Caco-2 (cell line): ENCODE measurements at regions of chr12 and their contacts with region 1.

Region 1: DNA sequence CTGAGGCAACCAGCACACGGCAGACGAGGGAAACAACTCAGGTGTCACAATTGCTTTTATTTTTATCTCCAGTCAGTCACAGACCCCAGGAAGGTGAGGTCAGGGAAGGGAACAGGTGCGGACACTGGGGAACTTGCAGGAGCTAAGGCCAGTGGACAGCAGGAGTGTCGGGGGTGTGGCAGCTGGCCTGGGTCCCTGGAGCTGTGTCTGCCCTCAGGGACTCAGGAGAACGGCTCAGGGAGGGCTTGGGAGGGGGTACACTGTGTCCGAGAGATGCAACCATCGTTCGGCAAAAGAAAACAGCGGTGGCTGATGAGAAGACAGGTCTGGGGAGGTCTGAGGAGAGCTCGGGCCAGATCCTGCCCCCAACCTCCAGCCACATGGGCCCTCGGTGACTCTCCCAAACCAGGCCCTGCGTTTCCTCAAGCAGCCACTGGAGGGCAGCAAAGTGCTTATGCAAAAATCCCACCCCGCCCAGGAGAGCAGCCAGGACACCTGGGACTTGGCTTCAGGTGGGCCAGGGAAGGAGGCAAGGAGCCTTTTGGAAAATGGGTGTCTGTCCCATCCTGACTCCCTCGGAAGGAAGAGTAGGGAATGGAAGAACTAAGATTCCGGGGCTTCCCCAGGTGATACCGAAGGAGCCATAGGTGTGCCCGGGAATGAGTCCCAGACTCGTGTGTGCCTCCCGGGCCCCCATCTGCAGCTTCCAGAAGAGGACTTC is 24.1 kb upstream of the BCDIN3D start:
- DNase-seq: peak; percentile 89 to 93
- H3K4me3 ChIP-seq: 0 out of 2 replicates have a peak overlapping the region, but pooled peaks have one; percentile 1
- H3K4me3 Mint-ChIP-seq: peak overlapping the region; percentile 60
- H3K27ac Mint-ChIP-seq: peak overlapping the region; percentile 90
- H3K4me1 ChIP-seq: peaks cover 53% of the 10 kb centered on the region
- H3K4me1 Mint-ChIP-seq: peaks cover 46% of the 10 kb centered on the region
- H3K27me3 ChIP-seq: no peaks in the 10 kb centered on the region
- H3K27me3 Mint-ChIP-seq: no peaks in the 10 kb centered on the region
- CTCF ChIP-seq: peak; percentile 98 to 99

Region 2: DNA sequence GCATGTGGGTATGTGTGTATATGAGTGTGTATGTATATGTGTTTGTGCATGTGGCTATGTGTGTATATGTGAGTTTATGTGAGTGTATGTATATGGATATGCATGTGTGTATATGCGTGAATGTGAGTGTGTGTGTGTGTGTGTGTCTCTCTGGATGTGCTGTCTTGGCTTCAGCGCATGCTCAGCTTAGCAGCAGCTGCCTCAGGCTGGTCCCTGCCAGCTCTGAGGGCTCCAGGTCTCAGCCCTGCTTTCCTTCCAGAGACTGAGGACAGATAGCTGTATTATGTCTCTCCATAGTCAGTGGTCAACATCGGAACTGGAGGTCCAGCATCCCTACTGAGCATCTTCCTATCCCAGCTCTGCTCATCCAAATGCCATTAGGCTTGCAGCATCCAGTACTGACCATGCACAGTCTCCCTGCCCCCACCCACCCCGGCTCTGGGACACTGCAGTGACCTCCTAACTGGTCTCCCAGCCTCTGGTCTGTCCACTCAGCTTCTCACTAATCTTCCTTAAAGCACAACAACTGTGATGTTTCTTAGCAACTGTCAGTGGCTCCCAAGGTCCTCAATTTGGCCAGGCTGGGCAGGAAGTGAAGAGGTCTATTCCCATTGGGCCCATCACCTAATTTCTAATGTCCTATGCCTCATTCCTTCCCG is 13.9 kb after region 1 on chr12:
- CTCF ChIA-PET with region 1: no interaction called
- POLR2A ChIA-PET with region 1: no interaction called
- intact Hi-C with region 1: no loop called
- DNase-seq: no peak
- H3K4me3 ChIP-seq: no peak overlapping the region
- H3K4me3 Mint-ChIP-seq: no peak overlapping the region
- H3K27ac Mint-ChIP-seq: no peak overlapping the region
- H3K4me1 ChIP-seq: no peaks in the 10 kb centered on the region
- H3K4me1 Mint-ChIP-seq: no peaks in the 10 kb centered on the region
- H3K27me3 ChIP-seq: no peaks in the 10 kb centered on the region
- H3K27me3 Mint-ChIP-seq: no peaks in the 10 kb centered on the region
- CTCF ChIP-seq: no peak

Region 3: GRCh38 chr12:49903695-49904423 is 36.8 kb after region 1 on chr12 and contains the start of gene FAIM2:
- CTCF ChIA-PET with region 1: interaction called, 4 read pairs
- POLR2A ChIA-PET with region 1: no interaction called
- intact Hi-C with region 1: loop called (anchors 5 kb)
- DNase-seq: no peak
- H3K4me3 ChIP-seq: no peak within 1 kb of the TSS
- H3K4me3 Mint-ChIP-seq: no peak within 1 kb of the TSS
- H3K27ac Mint-ChIP-seq: no peak within 1 kb of the TSS
- H3K4me1 ChIP-seq: no peaks in the 10 kb centered on the region
- H3K4me1 Mint-ChIP-seq: peaks cover 7% of the 10 kb centered on the region
- H3K27me3 ChIP-seq: no peaks in the 10 kb centered on the region
- H3K27me3 Mint-ChIP-seq: no peaks in the 10 kb centered on the region
- CTCF ChIP-seq: no peak
- total RNA-seq, gene FAIM2: 0.07 and 0.09 TPM in 2 replicates

Region 4: GRCh38 chr12:50043854-50044253 is 176.8 kb after region 1 on chr12:
- CTCF ChIA-PET with region 1: interaction called, 3 read pairs
- POLR2A ChIA-PET with region 1: no interaction called
- intact Hi-C with region 1: loop called (anchors 1 kb)
- DNase-seq: peak in 1 of 2 experiments; percentile 17
- H3K4me3 ChIP-seq: no peak overlapping the region
- H3K4me3 Mint-ChIP-seq: no peak overlapping the region
- H3K27ac Mint-ChIP-seq: no peak overlapping the region
- H3K4me1 ChIP-seq: peaks cover 9% of the 10 kb centered on the region
- H3K4me1 Mint-ChIP-seq: peaks cover 11% of the 10 kb centered on the region
- H3K27me3 ChIP-seq: no peaks in the 10 kb centered on the region
- H3K27me3 Mint-ChIP-seq: no peaks in the 10 kb centered on the region
- CTCF ChIP-seq: no peak

Region 5: DNA sequence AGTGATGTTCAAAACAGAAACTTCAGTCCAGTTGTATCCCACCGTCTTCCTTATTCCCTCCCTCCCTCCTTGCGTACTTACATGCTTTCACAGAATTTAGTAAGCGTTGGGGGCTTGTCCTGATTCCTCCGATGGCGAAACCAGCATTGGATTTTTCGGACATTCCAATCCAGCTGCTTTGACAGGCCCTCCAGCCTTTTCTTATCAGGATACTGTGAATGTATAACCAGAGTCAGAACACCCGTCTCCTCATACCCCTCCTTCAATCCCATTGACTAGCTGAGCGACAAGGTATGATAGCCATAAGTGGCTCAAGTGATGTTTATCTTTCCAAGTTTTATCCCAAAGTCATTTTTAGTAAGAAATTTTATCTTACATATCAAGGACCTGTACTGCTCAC is 276.0 kb after region 1 on chr12:
- CTCF ChIA-PET with region 1: interaction called, 15 read pairs
- POLR2A ChIA-PET with region 1: no interaction called
- intact Hi-C with region 1: no loop called
- DNase-seq: peak; percentile 74 to 81
- H3K4me3 ChIP-seq: no peak overlapping the region
- H3K4me3 Mint-ChIP-seq: peak overlapping the region; percentile 53
- H3K27ac Mint-ChIP-seq: peak overlapping the region; percentile 33
- H3K4me1 ChIP-seq: peaks cover 29% of the 10 kb centered on the region
- H3K4me1 Mint-ChIP-seq: peaks cover 23% of the 10 kb centered on the region
- H3K27me3 ChIP-seq: no peaks in the 10 kb centered on the region
- H3K27me3 Mint-ChIP-seq: no peaks in the 10 kb centered on the region
- CTCF ChIP-seq: no peak